Caco-2 (cell line): ENCODE measurements at regions of chr19 and their contacts with region 1.

Region 1: GRCh38 chr19:28843737-28844492 is 369.0 kb downstream of the UQCRFS1 start:
- DNase-seq: no peak
- H3K4me3 ChIP-seq: no peak overlapping the region
- H3K4me3 Mint-ChIP-seq: no peak overlapping the region
- H3K27ac Mint-ChIP-seq: no peak overlapping the region
- H3K4me1 ChIP-seq: no peaks in the 10 kb centered on the region
- H3K4me1 Mint-ChIP-seq: no peaks in the 10 kb centered on the region
- H3K27me3 ChIP-seq: no peaks in the 10 kb centered on the region
- H3K27me3 Mint-ChIP-seq: peaks cover 4% of the 10 kb centered on the region
- CTCF ChIP-seq: no peak

Region 2: DNA sequence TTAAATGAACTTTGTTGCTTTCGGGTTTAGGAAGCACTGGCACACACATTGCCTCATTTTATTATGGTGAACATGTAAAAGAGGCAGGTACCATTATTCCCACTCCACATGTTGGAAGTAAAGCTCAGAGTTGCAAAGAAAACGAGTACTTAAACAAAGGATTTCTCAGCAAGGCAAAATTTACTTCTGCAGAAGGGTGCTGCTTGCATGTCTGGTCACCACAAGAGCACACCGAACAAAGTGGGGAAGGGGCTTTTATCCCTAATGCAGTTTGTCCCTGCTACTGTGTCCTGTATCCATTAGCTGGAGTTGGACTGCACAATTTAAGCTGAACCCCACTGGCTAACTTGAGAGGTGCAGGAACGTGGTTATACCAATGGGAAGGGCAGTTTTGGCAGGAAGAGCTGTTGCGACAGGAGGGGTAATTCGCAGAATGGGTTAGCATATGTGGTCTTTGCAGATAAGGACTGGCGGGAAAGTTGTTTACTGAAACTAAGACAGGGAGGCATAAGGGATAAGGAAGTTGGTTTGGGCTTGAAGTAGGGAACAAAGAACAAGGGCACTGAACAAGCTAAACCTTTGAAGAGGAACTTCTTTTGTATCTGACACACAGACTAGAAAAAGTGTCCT is 176.5 kb before region 1 on chr19:
- CTCF ChIA-PET with region 1: interaction called, 11 read pairs
- POLR2A ChIA-PET with region 1: no interaction called
- intact Hi-C with region 1: no loop called
- DNase-seq: no peak
- H3K4me3 ChIP-seq: no peak overlapping the region
- H3K4me3 Mint-ChIP-seq: no peak overlapping the region
- H3K27ac Mint-ChIP-seq: no peak overlapping the region
- H3K4me1 ChIP-seq: no peaks in the 10 kb centered on the region
- H3K4me1 Mint-ChIP-seq: no peaks in the 10 kb centered on the region
- H3K27me3 ChIP-seq: no peaks in the 10 kb centered on the region
- H3K27me3 Mint-ChIP-seq: no peaks in the 10 kb centered on the region
- CTCF ChIP-seq: no peak